AG04450 (cell line): ENCODE measurements at regions of chr16 and their contacts with region 1.

Region 1: DNA sequence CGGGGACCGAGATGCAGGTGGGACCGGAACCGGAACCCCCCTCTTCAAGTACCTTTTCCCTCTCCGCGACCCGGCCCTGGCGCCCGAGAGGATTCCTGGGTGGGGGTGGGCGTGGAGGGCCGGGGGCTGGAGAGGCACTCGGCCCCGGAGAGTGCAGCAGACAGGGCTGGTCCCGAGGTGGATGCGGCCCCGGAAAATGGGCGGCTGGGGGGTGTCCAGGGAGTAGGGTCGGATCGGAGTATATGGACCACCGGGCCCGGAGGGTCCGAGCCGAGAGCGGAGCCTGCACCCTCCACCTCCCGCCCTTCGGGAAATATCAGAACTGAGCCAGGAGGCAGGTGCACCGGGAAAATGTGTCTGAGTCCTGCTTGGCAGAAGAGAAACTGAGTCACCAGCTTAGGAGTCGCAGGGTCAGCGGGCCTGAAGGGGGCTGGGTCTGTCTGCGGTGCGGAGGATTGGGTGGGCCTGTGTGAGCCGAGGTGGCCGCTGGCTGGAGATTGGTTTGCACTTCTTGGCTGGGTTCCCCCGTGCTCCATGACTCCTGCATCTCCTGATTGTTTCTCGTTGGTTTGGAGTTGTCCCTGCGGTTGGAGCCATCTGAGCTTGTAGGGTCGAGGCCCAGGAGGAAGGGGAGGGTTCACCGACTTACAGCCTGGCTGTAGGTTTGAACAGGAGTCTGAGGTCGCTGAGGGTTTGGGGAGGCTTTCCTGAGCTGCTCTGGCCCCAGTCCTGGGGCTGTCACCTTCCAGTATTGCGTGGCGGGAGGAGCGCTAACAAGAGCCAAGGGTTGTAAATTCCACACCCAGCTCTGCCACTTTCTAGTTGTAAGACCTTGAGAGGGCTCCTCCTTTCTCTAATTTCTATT is 518 bp downstream of the SH2B1 start:
- DNase-seq: no peak
- H3K4me3 ChIP-seq: peak overlapping the region; percentile 94
- H3K27ac ChIP-seq: peak overlapping the region; percentile 52
- H3K27me3 ChIP-seq: no peaks in the 10 kb centered on the region
- CTCF ChIP-seq: no peak

Region 2: DNA sequence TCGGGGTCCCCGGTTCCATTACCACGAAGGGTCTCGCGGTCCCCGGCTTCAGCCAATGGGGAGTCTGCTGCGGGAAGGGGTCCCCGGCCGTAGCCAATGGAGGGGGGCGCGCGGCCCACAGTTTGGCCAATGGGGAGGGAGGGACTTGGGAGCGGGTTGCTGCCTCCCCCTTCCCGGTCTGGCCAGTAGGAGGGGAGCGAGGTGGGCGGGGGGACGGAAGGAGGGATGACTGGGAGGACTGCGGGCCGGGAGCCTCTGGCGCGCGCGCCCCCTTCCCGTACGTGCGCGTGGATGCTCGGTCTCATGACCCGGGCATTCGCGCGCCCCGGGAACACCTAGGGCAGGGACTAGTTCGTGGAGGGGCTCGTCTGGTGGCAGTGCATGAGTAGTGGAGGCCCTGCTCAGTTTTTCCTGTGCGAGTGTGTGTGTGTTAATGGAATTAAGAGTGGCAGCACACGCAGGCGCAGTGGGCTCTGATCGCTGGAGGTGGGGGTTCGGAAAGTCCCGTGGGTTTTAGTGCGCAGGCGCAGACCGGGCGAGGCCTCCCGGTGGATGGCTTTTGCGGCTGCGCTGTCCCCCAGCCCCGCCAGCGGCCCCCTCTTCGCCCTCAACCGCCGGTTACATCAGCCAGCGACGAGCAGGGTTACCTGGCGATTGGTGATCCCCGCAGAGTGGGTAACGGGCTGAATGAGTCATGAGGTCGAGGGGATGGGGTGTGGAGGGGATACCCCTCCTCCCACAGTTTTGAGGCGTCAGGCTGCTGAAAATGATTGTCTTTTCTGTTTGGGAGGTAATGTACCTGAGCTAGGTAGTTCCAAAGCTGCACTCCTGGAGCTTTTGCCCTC is 40.1 kb before region 1 on chr16:
- CTCF ChIA-PET with region 1: no interaction called
- POLR2A ChIA-PET with region 1: interaction called, 15 read pairs
- DNase-seq: peak; percentile 97
- H3K4me3 ChIP-seq: peak overlapping the region; percentile 98
- H3K27ac ChIP-seq: peak overlapping the region; percentile 98
- H3K27me3 ChIP-seq: no peaks in the 10 kb centered on the region
- CTCF ChIP-seq: 0 out of 2 replicates have a peak, but pooled peaks have one; percentile 9

Region 3: GRCh38 chr16:28846080-28846932 is 17.9 kb before region 1 on chr16 and contains the start of gene TUFM:
- CTCF ChIA-PET with region 1: interaction called, 4 read pairs
- POLR2A ChIA-PET with region 1: interaction called, 29 read pairs
- DNase-seq: peak; percentile 97
- H3K4me3 ChIP-seq: peak within 1 kb of the TSS; percentile 99
- H3K27ac ChIP-seq: peak within 1 kb of the TSS; percentile 65
- H3K27me3 ChIP-seq: no peaks in the 10 kb centered on the region
- CTCF ChIP-seq: peak; percentile 65
- polyA plus RNA-seq, gene TUFM: 107 and 110 TPM in 2 replicates

Region 4: DNA sequence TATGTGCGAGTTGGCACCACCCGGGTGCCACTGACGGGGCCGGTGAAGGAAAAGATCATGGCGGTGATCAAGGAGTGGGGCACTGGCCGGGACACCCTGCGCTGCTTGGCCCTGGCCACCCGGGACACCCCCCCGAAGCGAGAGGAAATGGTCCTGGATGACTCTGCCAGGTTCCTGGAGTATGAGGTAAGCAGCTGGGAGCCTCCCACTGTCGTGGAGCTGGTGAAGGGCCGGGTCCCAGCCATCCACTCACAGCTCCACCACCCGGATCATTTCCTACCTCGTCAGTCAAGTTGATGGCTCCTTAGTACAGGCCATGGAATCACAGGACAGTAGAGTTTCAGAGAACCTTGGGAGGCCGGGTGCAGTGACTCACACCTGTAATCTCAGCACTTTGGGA is 34.1 kb after region 1 on chr16:
- CTCF ChIA-PET with region 1: no interaction called
- POLR2A ChIA-PET with region 1: no interaction called
- DNase-seq: no peak
- H3K4me3 ChIP-seq: no peak overlapping the region
- H3K27ac ChIP-seq: no peak overlapping the region
- H3K27me3 ChIP-seq: no peaks in the 10 kb centered on the region
- CTCF ChIP-seq: no peak